ENCODE measurements at regions of chr19 and their contacts with region 1.

Region 1: GRCh38 chr19:6720369-6721137 is at the start of gene C3:
- DNase-seq: peak; percentile 69 to 88
- H3K4me3 ChIP-seq: peak within 1 kb of the TSS; percentile 64
- H3K27ac ChIP-seq: peak within 1 kb of the TSS; percentile 77
- H3K4me1 ChIP-seq: peaks cover 47% of the 10 kb centered on the region
- H3K27me3 ChIP-seq: no peaks in the 10 kb centered on the region
- CTCF ChIP-seq: no peak
- total RNA-seq, gene C3: 130 and 132 TPM in 2 replicates

Region 2: GRCh38 chr19:6489278-6490061 is 231.1 kb before region 1 on chr19:
- CTCF ChIA-PET with region 1: no interaction called
- POLR2A ChIA-PET with region 1: no interaction called
- intact Hi-C with region 1: no loop called
- DNase-seq: no peak
- H3K4me3 ChIP-seq: no peak overlapping the region
- H3K27ac ChIP-seq: no peak overlapping the region
- H3K4me1 ChIP-seq: peaks cover 2% of the 10 kb centered on the region; the same call in 1 of the 2 replicates
- H3K27me3 ChIP-seq: no peaks in the 10 kb centered on the region
- CTCF ChIP-seq: no peak

Region 3: DNA sequence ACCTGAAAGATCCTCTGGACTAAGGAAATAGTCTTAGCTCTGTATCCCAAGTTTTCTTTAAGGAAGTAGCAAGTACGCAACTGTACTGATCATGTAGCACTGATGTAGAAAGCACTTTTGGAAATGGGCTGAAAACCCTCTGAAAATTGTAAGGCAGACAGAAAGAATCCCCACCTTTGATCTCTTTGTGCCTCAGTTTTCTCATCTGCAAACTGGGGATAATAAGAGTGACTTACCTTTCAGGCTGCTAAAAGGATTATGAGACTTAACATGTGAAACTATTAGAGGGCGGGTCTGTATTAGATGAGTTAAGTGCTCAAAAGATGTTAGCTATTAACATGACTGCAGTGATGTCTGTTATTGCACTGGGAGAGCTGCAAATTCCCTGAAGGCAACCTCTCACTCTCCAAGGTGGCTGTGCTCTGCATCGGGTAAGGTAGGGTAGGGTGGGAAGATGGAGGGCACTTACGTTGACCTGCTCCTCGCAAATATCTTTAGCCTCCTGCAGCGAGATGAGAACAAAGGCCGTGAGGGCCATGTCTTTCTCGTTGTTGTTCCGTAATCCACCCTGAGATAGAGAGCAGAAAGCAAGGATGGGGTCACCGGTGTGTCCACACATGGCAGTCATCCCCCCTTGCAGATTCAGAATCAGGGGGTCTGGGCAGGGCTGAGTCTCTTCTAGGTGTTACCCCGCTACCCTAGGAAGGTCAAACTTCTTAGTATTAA is 30.2 kb before region 1 on chr19:
- CTCF ChIA-PET with region 1: no interaction called
- POLR2A ChIA-PET with region 1: interaction called, 15 read pairs
- intact Hi-C with region 1: no loop called
- DNase-seq: no peak
- H3K4me3 ChIP-seq: no peak overlapping the region
- H3K27ac ChIP-seq: no peak overlapping the region
- H3K4me1 ChIP-seq: no peaks in the 10 kb centered on the region
- H3K27me3 ChIP-seq: no peaks in the 10 kb centered on the region
- CTCF ChIP-seq: no peak

Region 4: DNA sequence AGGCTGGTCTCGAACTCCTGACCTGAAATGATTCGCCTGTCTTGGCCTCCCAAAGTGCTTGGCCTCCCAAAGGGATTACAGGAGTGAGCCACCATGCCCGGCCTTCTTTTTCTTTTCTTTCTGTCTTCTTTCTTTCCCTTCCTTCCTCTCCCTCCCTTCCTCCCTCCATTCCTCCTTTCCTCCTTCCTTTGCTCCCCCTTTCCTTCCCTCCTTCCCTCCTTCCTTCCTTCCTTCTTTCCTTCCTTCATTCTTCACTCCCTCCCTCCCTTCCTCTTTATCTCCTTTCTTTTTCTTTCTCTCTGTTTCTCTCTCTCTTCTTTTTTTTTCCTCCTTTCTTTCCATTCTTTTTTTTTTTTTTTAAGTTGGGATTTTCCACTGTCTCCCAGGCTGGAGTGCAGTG is 12.2 kb before region 1 on chr19:
- CTCF ChIA-PET with region 1: interaction called, 10 read pairs
- POLR2A ChIA-PET with region 1: no interaction called
- intact Hi-C with region 1: no loop called
- DNase-seq: no peak
- H3K4me3 ChIP-seq: no peak overlapping the region
- H3K27ac ChIP-seq: no peak overlapping the region
- H3K4me1 ChIP-seq: no peaks in the 10 kb centered on the region
- H3K27me3 ChIP-seq: no peaks in the 10 kb centered on the region
- CTCF ChIP-seq: no peak

Region 5: DNA sequence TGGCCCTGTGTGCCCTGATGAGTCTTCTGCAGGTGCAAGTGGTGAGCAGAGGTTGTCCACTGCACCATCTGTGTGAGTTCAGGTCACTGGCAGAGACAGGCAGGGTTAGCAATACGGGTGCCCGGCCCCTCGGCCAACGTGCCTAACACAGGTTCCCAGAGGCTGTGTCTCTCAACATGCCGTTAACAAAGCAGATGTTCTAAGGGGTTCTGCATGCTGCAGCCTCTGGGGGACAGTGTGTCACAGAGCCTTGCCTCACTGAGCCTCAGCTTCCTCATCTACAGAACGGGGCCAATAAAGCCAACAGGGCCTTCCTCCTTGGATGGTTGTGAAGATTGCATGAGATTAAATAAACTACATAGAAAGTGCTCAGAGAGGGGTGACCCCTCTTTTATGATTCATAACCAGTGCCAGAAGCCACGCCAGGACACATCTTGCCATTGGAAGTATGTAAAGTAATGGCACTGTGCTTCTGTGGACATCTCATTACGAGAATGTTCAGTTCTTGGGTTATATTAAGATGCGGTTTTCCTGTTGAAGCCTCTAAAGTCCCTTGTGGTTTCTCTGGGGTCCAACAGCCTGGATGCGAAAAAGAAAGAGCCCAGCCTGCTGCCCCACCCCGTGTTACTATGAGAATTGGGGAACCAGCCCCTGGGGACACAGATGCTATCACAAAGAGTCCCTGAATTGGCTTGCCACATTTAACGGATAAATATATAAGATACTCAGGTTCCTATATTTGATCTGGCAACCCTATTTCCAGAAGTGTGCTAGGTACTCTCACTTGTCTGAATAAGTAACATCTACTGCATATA is 617.0 kb after region 1 on chr19:
- CTCF ChIA-PET with region 1: no interaction called
- POLR2A ChIA-PET with region 1: no interaction called
- intact Hi-C with region 1: no loop called
- DNase-seq: no peak
- H3K4me3 ChIP-seq: no peak overlapping the region
- H3K27ac ChIP-seq: no peak overlapping the region
- H3K4me1 ChIP-seq: no peaks in the 10 kb centered on the region
- H3K27me3 ChIP-seq: no peaks in the 10 kb centered on the region
- CTCF ChIP-seq: no peak